SK-N-SH (cell line): ENCODE measurements at regions of chr6 and their contacts with region 1.

Region 1: DNA sequence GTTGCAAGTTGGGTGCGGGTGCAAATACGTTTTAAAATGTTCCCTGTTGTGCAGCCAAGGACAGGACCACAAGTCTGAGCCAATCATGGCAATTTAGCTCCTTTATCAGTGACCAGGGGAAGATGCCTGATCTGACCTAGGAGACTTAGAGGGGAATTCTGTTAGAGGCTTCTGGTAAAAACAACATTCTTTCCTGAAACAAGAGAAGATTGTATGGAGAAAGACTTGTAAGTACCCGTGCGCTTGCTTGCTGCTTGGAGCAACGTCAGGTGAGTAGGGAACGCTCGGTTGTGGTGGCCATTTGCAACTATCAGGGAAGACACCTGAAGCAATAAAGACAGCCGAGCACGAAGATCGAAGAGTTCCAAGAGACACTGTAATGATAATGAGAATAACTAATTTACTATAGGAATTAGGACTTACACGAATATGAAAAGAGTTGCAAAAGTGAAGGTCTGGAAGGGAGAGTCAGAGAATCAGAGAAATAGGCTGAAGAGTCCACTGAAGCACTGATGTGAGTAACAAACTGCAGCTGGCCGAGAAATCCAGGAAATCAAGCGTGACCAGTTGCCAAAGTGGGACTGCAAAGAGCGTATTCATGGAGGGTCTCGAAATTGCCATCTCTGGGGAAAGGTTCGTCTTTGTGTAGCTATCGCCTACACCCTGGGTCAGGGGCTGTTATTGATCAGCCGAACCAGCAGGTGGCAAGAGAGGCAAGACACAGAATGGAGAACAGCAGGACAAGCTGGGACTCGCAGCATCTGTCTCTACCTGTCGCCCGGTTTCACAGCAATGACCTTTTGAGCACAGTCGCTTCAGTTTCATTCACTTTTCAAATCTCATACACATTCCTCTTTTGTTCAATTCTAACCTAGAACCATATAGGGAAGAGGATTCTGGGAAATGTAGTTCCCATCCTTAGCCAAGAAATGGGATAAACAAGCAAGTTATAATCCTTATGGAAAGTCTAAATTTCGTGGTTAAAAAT is 26.1 kb downstream of the LOC128125822 start:
- DNase-seq: peak; percentile 78
- H3K4me3 ChIP-seq: peak overlapping the region; percentile 67 to 77
- H3K27ac ChIP-seq: peak overlapping the region in 1 of 2 experiments; percentile 76; a peak in 2 of 4 replicates
- H3K4me1 ChIP-seq: no peaks in the 10 kb centered on the region; a peak in 1 of 4 replicates
- H3K27me3 ChIP-seq: no peaks in the 10 kb centered on the region
- CTCF ChIP-seq: peak; percentile 96
- EP300 ChIP-seq: no peak
- RAD21 ChIP-seq: peak; percentile 72

Region 2: DNA sequence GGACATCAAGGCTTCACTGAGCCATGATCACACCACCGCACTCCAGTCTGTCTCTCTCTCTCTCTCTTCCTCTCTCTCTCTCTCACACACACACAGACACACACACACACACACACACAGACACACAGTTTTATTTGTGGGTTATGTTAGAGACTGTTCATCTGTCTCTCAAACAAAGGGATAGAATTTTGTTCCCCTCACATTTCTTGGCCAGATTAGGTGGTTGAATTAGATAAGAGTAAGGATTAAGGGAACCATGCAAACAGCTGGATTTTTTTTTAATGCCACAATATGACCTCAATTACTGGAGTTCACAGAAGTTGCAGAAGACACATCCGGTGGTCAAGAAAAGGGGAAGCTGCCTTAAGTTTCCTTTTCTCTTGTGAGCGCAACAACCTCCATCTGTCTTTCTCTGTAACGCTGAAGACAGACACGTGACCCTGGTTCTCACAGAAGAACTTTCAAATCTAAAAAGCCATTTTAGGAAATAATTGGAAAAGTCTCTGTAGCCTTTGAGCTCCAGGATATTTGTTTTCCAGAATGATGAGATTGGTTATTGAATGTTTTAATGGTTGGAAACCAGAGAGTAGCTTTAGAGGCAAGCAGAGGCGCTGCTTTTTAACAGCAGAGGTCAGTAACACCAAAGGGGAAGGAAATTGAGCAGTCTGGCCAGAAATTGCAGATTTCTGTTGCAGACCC is 245.6 kb before region 1 on chr6:
- CTCF ChIA-PET with region 1: interaction called, 12 read pairs
- POLR2A ChIA-PET with region 1: no interaction called
- DNase-seq: peak; percentile 5
- H3K4me3 ChIP-seq: no peak overlapping the region
- H3K27ac ChIP-seq: no peak overlapping the region
- H3K4me1 ChIP-seq: peaks cover 0 to 12% of the 10 kb centered on the region in 2 experiments; a peak in 1 of 4 replicates
- H3K27me3 ChIP-seq: no peaks in the 10 kb centered on the region
- CTCF ChIP-seq: peak; percentile 70
- EP300 ChIP-seq: no peak
- RAD21 ChIP-seq: peak; percentile 81

Region 3: GRCh38 chr6:63609231-63609630 is 10.9 kb after region 1 on chr6:
- CTCF ChIA-PET with region 1: interaction called, 25 read pairs
- POLR2A ChIA-PET with region 1: no interaction called
- DNase-seq: no peak
- H3K4me3 ChIP-seq: no peak overlapping the region
- H3K27ac ChIP-seq: no peak overlapping the region
- H3K4me1 ChIP-seq: no peaks in the 10 kb centered on the region
- H3K27me3 ChIP-seq: no peaks in the 10 kb centered on the region
- CTCF ChIP-seq: no peak
- EP300 ChIP-seq: no peak
- RAD21 ChIP-seq: no peak

Region 4: GRCh38 chr6:63630466-63630865 is 32.1 kb after region 1 on chr6:
- CTCF ChIA-PET with region 1: interaction called, 17 read pairs
- POLR2A ChIA-PET with region 1: interaction called, 7 read pairs
- DNase-seq: no peak
- H3K4me3 ChIP-seq: no peak overlapping the region
- H3K27ac ChIP-seq: no peak overlapping the region
- H3K4me1 ChIP-seq: peaks cover 0 to 3% of the 10 kb centered on the region in 2 experiments; a peak in 3 of 4 replicates
- H3K27me3 ChIP-seq: no peaks in the 10 kb centered on the region; the same call in 1 of the 2 replicates
- CTCF ChIP-seq: no peak
- EP300 ChIP-seq: no peak
- RAD21 ChIP-seq: no peak

Region 5: GRCh38 chr6:63635588-63636517 is 37.5 kb after region 1 on chr6 and contains the start of gene PHF3:
- CTCF ChIA-PET with region 1: interaction called, 12 read pairs
- POLR2A ChIA-PET with region 1: interaction called, 7 read pairs
- DNase-seq: peak; percentile 97
- H3K4me3 ChIP-seq: peak within 1 kb of the TSS; percentile 89 to 96
- H3K27ac ChIP-seq: peak within 1 kb of the TSS; percentile 90 to 97
- H3K4me1 ChIP-seq: peaks cover 11 to 23% of the 10 kb centered on the region in 2 experiments; a peak in 3 of 4 replicates
- H3K27me3 ChIP-seq: no peaks in the 10 kb centered on the region
- CTCF ChIP-seq: peak; percentile 31
- EP300 ChIP-seq: peak in 1 of 2 experiments; percentile 23; a peak in 2 of 4 replicates
- RAD21 ChIP-seq: peak; percentile 32
- polyA plus RNA-seq, gene PHF3: 4.4 and 5.3 TPM in 2 replicates

Region 6: DNA sequence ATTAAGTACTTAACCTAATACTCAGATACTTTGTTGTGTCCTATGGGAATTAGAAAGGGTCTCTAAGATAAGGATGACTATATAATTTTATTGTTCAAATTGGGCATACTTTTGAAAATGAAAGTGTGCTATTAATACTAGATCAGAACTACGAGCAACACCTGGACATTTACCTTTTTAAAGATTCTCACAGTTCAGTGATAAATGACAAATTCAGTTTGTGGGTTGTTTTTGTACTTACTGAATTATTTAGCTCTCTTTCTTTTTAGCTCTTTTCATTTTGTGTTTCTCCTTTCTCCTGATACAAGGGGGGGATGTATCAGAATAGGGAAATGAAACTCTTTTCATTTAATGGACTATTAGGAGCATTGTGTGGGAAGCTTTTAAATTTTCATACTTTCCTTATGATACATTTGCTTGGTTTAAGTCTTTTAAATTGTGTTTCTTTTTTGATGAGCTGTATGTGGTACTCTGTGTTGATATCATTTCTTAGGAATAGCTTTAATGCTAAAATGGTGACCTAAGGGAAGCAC is 84.8 kb after region 1 on chr6:
- CTCF ChIA-PET with region 1: interaction called, 12 read pairs
- POLR2A ChIA-PET with region 1: no interaction called
- DNase-seq: no peak
- H3K4me3 ChIP-seq: no peak overlapping the region
- H3K27ac ChIP-seq: no peak overlapping the region
- H3K4me1 ChIP-seq: no peaks in the 10 kb centered on the region
- H3K27me3 ChIP-seq: no peaks in the 10 kb centered on the region
- CTCF ChIP-seq: no peak
- EP300 ChIP-seq: no peak
- RAD21 ChIP-seq: no peak

Region 7: DNA sequence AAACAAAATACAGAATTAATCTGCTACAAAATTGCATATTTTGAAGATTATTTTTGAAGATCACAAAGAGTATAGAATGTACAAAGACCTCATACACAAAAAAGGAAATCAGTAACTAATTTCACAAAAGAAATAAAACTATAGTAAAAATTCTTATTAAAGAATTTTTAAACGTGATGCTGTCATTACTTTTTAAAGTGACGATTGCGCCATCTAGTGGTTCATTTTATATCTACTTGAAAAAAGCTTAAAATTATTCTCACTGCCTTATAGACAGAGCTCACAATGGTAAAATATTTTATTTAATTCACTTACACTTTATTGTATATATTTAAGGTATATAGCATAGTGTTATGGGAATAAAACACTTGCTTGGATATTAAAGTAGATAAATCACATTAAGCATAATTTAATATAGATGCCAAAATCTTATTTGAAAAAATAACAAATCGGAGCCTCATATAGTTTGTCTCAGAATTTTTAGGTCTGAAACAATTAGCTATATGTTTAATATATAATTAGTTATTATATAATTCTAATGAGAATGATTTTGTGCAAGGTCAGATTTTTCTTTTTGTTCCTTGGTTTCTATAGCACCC is 166.1 kb after region 1 on chr6:
- CTCF ChIA-PET with region 1: interaction called, 21 read pairs
- POLR2A ChIA-PET with region 1: interaction called, 4 read pairs
- DNase-seq: no peak
- H3K4me3 ChIP-seq: no peak overlapping the region
- H3K27ac ChIP-seq: no peak overlapping the region
- H3K4me1 ChIP-seq: no peaks in the 10 kb centered on the region
- H3K27me3 ChIP-seq: no peaks in the 10 kb centered on the region
- CTCF ChIP-seq: peak; percentile 69
- EP300 ChIP-seq: no peak
- RAD21 ChIP-seq: peak; percentile 68